CD4-positive, alpha-beta memory T cell (primary cell): ENCODE measurements at regions of chr13 and their contacts with region 1.

Region 1: DNA sequence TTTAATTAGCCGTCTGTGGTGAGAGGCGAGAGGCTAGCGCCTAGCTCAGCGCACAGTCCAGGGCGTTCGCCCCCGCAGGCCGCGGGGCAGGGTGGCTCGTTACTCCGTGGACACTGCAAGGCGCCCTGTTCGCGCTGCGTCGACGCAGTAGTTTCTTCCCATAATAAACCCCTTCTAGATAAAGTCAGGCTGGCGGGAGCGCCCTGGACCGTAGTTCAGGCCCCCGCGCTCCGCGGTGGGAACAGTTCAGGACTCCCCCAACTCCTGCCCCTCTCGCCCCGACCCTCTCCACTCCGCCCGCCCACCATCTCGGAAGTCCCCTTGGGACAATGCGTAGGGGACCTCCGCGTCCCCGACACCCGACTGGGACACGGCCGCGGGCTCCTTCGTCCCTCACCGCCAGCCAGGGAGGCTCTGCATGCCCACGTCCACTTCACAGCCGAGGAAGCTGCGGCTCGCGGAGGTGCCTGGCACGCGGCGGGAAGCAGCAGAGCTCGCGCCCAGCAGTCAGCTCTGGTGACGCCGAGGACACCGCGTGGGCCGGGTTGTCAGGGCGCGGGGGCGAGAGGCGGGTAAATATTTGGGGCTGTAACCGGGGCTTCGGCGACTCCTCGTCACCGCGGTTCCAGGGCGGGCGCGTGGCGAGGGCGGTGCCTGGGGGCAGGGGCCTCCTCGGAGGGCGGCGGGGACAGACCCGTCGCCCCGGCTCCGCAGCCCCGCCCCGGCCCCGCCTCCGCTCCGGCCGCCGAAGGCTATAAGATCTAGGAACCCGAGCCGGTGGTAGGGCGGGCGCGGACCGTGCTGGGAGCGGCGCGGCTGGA is at the start of gene RGCC:
- DNase-seq: peak; percentile 96 to 97 (median 97)
- H3K4me3 ChIP-seq: peak within 1 kb of the TSS; percentile 61 to 99
- H3K4me3 Mint-ChIP-seq: peak within 1 kb of the TSS; percentile 90 to 99 (median 94)
- H3K27ac ChIP-seq: peak within 1 kb of the TSS; percentile 93
- H3K27ac Mint-ChIP-seq: peak within 1 kb of the TSS; percentile 96 to 99 (median 97)
- H3K4me1 ChIP-seq: peaks cover 38% of the 10 kb centered on the region
- H3K4me1 Mint-ChIP-seq: peaks cover 28 to 53% (median 41%) of the 10 kb centered on the region in 4 donors
- H3K27me3 ChIP-seq: no peaks in the 10 kb centered on the region
- H3K27me3 Mint-ChIP-seq: no peaks in the 10 kb centered on the region
- total RNA-seq, gene RGCC: 146 to 154 TPM

Region 2: DNA sequence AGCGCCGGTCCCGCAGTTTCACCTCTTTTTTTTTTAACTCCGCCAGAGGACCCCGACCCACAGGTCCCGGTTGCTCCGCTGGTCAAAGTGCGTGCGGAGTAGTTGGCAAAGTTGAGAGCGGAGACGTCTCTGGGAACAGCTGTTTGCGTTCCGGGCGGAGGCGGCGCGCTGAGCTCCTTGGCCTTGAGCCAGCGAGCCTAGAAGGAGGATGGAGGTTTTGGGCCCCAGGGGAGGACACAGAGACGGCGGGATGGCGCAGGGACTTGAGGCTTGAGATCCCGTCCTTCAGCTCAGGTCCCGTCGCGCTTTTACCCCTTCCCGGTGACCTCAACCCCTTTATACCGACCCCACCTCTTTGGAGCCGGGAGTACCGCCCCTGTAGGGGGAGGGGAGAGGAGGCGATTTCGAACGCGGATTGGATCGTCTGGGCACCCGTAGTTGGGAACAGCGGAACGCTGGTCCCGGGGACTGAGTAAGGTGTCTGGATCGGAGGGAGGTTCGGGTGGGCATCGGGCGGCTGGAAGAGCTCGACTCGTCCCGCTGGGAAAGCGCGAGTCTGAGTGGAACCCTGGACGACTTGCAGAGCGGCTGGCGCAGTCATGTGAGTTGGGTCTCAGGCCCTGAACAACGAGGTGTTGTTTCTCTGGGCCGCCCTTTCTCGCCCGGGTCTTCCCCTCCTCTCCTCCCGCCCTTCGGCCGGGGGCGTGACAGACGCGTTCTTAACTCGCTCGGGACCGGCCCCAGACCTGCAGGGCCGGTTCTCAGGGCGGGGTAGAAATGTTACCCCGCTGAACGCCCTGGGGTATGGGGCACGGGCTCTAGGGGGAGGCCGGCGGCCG is 395.7 kb before region 1 on chr13 and contains the start of gene WBP4:
- CTCF ChIA-PET with region 1: no interaction called
- POLR2A ChIA-PET with region 1: no interaction called
- intact Hi-C with region 1: loop called (anchors 5 kb)
- DNase-seq: peak; percentile 89 to 94 (median 90)
- H3K4me3 ChIP-seq: peak within 1 kb of the TSS; percentile 92 to 99
- H3K4me3 Mint-ChIP-seq: peak within 1 kb of the TSS; percentile 97 to 100 (median 100)
- H3K27ac ChIP-seq: peak within 1 kb of the TSS; percentile 81
- H3K27ac Mint-ChIP-seq: peak within 1 kb of the TSS; percentile 99 to 100 (median 99)
- H3K4me1 ChIP-seq: peaks cover 42% of the 10 kb centered on the region
- H3K4me1 Mint-ChIP-seq: peaks cover 28 to 74% (median 38%) of the 10 kb centered on the region in 4 donors
- H3K27me3 ChIP-seq: no peaks in the 10 kb centered on the region
- H3K27me3 Mint-ChIP-seq: peaks cover 2 to 5% of the 10 kb centered on the region in 2 donors
- total RNA-seq, gene WBP4: 8.4 to 9.1 TPM

Region 3: GRCh38 chr13:41352935-41353840 is 103.8 kb before region 1 on chr13:
- CTCF ChIA-PET with region 1: interaction called, 17 read pairs
- POLR2A ChIA-PET with region 1: interaction called, 53 read pairs
- intact Hi-C with region 1: loop called (anchors 1 kb)
- DNase-seq: peak; percentile 75 to 78 (median 76)
- H3K4me3 ChIP-seq: no peak overlapping the region
- H3K4me3 Mint-ChIP-seq: peak overlapping the region in 7 of 8 donors; percentile 4 to 76 (median 28)
- H3K27ac ChIP-seq: peak overlapping the region; percentile 65
- H3K27ac Mint-ChIP-seq: peak overlapping the region; percentile 79 to 97 (median 92)
- H3K4me1 ChIP-seq: peaks cover 51% of the 10 kb centered on the region
- H3K4me1 Mint-ChIP-seq: peaks cover 37 to 60% (median 47%) of the 10 kb centered on the region in 4 donors
- H3K27me3 ChIP-seq: no peaks in the 10 kb centered on the region
- H3K27me3 Mint-ChIP-seq: no peaks in the 10 kb centered on the region

Region 4: DNA sequence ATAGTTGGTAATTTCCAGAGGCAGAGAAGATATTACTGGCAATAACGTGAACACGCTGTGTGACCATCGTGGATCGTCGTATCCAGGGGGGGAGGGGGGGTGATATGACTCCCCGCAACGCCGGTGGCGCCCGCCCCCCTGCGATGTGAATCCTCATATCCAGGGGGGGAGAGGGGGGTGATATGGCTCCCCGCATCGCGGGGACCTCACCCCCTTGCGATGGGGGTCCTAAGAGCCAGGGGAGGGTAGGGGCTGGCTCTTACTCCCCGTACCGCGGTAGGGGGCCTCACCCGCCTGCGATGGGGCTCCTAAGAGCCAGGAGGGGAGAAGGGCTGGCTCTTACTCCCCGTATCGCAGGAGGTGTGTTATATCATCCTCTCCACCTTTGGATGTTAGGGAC is 30.9 kb before region 1 on chr13:
- CTCF ChIA-PET with region 1: no interaction called
- POLR2A ChIA-PET with region 1: no interaction called
- intact Hi-C with region 1: no loop called
- DNase-seq: no peak
- H3K4me3 ChIP-seq: no peak overlapping the region
- H3K4me3 Mint-ChIP-seq: no peak overlapping the region
- H3K27ac ChIP-seq: no peak overlapping the region
- H3K27ac Mint-ChIP-seq: no peak overlapping the region
- H3K4me1 ChIP-seq: peaks cover 13% of the 10 kb centered on the region
- H3K4me1 Mint-ChIP-seq: peaks cover 5 to 17% (median 8%) of the 10 kb centered on the region in 4 donors
- H3K27me3 ChIP-seq: no peaks in the 10 kb centered on the region
- H3K27me3 Mint-ChIP-seq: peaks cover 2 to 4% of the 10 kb centered on the region in 2 donors

Region 5: GRCh38 chr13:41502673-41503072 is 45.7 kb after region 1 on chr13:
- CTCF ChIA-PET with region 1: interaction called, 69 read pairs
- POLR2A ChIA-PET with region 1: interaction called, 52 read pairs
- intact Hi-C with region 1: loop called (anchors 2 kb)
- DNase-seq: peak; percentile 35 to 47 (median 40)
- H3K4me3 ChIP-seq: no peak overlapping the region
- H3K4me3 Mint-ChIP-seq: peak overlapping the region in 6 of 8 donors; percentile 12 to 59 (median 45)
- H3K27ac ChIP-seq: no peak overlapping the region
- H3K27ac Mint-ChIP-seq: peak overlapping the region; percentile 10 to 88 (median 77)
- H3K4me1 ChIP-seq: peaks cover 50% of the 10 kb centered on the region
- H3K4me1 Mint-ChIP-seq: peaks cover 32 to 53% (median 49%) of the 10 kb centered on the region in 4 donors
- H3K27me3 ChIP-seq: no peaks in the 10 kb centered on the region
- H3K27me3 Mint-ChIP-seq: no peaks in the 10 kb centered on the region

Region 6: GRCh38 chr13:41565221-41565620 is 108.2 kb after region 1 on chr13:
- CTCF ChIA-PET with region 1: interaction called, 7 read pairs
- POLR2A ChIA-PET with region 1: interaction called, 20 read pairs
- intact Hi-C with region 1: no loop called
- DNase-seq: no peak
- H3K4me3 ChIP-seq: no peak overlapping the region
- H3K4me3 Mint-ChIP-seq: no peak overlapping the region
- H3K27ac ChIP-seq: no peak overlapping the region
- H3K27ac Mint-ChIP-seq: peak overlapping the region in 4 of 7 donors; percentile 13 to 36 (median 30)
- H3K4me1 ChIP-seq: no peaks in the 10 kb centered on the region
- H3K4me1 Mint-ChIP-seq: peaks cover 0 to 11% (median 6%) of the 10 kb centered on the region in 4 donors
- H3K27me3 ChIP-seq: no peaks in the 10 kb centered on the region
- H3K27me3 Mint-ChIP-seq: no peaks in the 10 kb centered on the region

Region 7: GRCh38 chr13:42011691-42012391 is 554.9 kb after region 1 on chr13:
- CTCF ChIA-PET with region 1: no interaction called
- POLR2A ChIA-PET with region 1: no interaction called
- intact Hi-C with region 1: no loop called
- DNase-seq: no peak
- H3K4me3 ChIP-seq: no peak overlapping the region
- H3K4me3 Mint-ChIP-seq: no peak overlapping the region
- H3K27ac ChIP-seq: no peak overlapping the region
- H3K27ac Mint-ChIP-seq: no peak overlapping the region
- H3K4me1 ChIP-seq: no peaks in the 10 kb centered on the region
- H3K4me1 Mint-ChIP-seq: no peaks in the 10 kb centered on the region
- H3K27me3 ChIP-seq: no peaks in the 10 kb centered on the region
- H3K27me3 Mint-ChIP-seq: peaks cover 4 to 6% of the 10 kb centered on the region in 2 donors

Region 8: GRCh38 chr13:42048682-42049453 is 591.9 kb after region 1 on chr13:
- CTCF ChIA-PET with region 1: no interaction called
- POLR2A ChIA-PET with region 1: no interaction called
- intact Hi-C with region 1: loop called (anchors 5 kb)
- DNase-seq: peak; percentile 51 to 71 (median 57)
- H3K4me3 ChIP-seq: peak overlapping the region; percentile 45 to 76
- H3K4me3 Mint-ChIP-seq: peak overlapping the region; percentile 82 to 93 (median 89)
- H3K27ac ChIP-seq: peak overlapping the region; percentile 53
- H3K27ac Mint-ChIP-seq: peak overlapping the region in 4 of 7 donors; percentile 61 to 88 (median 74)
- H3K4me1 ChIP-seq: peaks cover 12% of the 10 kb centered on the region
- H3K4me1 Mint-ChIP-seq: peaks cover 17 to 25% (median 19%) of the 10 kb centered on the region in 4 donors
- H3K27me3 ChIP-seq: no peaks in the 10 kb centered on the region
- H3K27me3 Mint-ChIP-seq: no peaks in the 10 kb centered on the region